ENCODE measurements at regions of chr7 and their contacts with region 1.

Region 1: GRCh38 chr7:100604028-100604975 is 2.1 kb downstream of the PCOLCE start:
- DNase-seq: peak; percentile 64 to 88 (median 76)
- H3K4me3 ChIP-seq: peak overlapping the region; percentile 55
- H3K4me3 Mint-ChIP-seq: peak overlapping the region; percentile 81 to 95 (median 87)
- H3K27ac ChIP-seq: peak overlapping the region; percentile 75
- H3K27ac Mint-ChIP-seq: peak overlapping the region; percentile 38 to 98 (median 94)
- H3K4me1 ChIP-seq: peaks cover 18% of the 10 kb centered on the region
- H3K4me1 Mint-ChIP-seq: peaks cover 11 to 30% (median 18%) of the 10 kb centered on the region in 3 donors
- H3K27me3 ChIP-seq: no peaks in the 10 kb centered on the region
- H3K27me3 Mint-ChIP-seq: no peaks in the 10 kb centered on the region

Region 2: DNA sequence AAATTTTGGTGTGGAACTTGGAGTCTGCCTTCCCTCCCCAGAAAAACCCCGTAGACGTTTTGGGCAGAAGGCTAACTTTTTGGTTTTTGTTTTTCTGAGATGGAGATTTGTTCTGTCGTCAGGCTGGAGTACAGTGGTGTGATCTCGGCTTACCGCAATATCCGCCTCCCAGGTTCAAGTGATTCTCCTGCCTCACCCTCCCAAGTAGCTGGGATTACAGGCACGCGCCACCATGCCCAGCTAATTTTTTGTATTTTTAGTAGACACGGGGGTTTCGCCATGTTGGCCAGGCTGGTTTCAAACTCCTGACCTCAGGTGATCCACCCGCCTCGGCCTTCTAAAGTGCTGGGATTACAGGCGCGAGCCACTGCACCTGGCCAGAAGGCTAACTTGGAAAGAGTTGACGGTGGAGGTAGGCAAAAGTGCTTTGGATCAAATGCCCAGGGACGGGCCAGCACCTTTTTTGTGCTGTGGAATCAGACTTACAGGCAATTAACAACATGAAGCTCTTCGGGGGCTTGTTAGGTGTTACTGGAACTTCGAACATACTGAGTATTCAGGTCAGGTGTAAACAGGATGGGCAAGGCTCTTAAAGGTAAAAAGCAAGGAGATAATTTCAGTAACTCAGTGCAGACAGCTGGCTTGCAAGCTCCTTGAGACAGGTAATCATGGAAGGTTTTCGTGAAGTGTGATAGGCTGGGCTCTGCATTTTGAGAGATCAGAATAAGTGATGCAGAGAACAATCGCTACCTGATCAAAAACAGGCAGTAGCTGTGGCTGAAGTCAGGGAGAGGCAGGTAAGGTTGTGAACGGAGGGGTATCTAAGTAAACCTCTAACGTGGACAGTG is 169.8 kb before region 1 on chr7:
- CTCF ChIA-PET with region 1: no interaction called
- POLR2A ChIA-PET with region 1: no interaction called
- DNase-seq: no peak
- H3K4me3 ChIP-seq: peak overlapping the region; percentile 65
- H3K4me3 Mint-ChIP-seq: peak overlapping the region; percentile 84 to 97 (median 89)
- H3K27ac ChIP-seq: peak overlapping the region; percentile 89
- H3K27ac Mint-ChIP-seq: peak overlapping the region; percentile 83 to 98 (median 92)
- H3K4me1 ChIP-seq: peaks cover 41% of the 10 kb centered on the region
- H3K4me1 Mint-ChIP-seq: peaks cover 42 to 61% (median 44%) of the 10 kb centered on the region in 3 donors
- H3K27me3 ChIP-seq: no peaks in the 10 kb centered on the region
- H3K27me3 Mint-ChIP-seq: peaks cover 0 to 4% of the 10 kb centered on the region in 2 donors

Region 3: GRCh38 chr7:100469227-100470044 is 134.9 kb before region 1 on chr7:
- CTCF ChIA-PET with region 1: no interaction called
- POLR2A ChIA-PET with region 1: no interaction called
- DNase-seq: peak; percentile 69 to 86 (median 80)
- H3K4me3 ChIP-seq: no peak overlapping the region
- H3K4me3 Mint-ChIP-seq: no peak overlapping the region
- H3K27ac ChIP-seq: no peak overlapping the region
- H3K27ac Mint-ChIP-seq: peak overlapping the region in 7 of 8 donors; percentile 64 to 83 (median 70)
- H3K4me1 ChIP-seq: peaks cover 24% of the 10 kb centered on the region
- H3K4me1 Mint-ChIP-seq: peaks cover 17 to 46% (median 31%) of the 10 kb centered on the region in 3 donors
- H3K27me3 ChIP-seq: no peaks in the 10 kb centered on the region
- H3K27me3 Mint-ChIP-seq: no peaks in the 10 kb centered on the region

Region 4: GRCh38 chr7:100626530-100627237 is 22.4 kb after region 1 on chr7:
- CTCF ChIA-PET with region 1: interaction called, 10 read pairs
- POLR2A ChIA-PET with region 1: no interaction called
- DNase-seq: peak; percentile 80 to 93 (median 83)
- H3K4me3 ChIP-seq: peak overlapping the region; percentile 81
- H3K4me3 Mint-ChIP-seq: peak overlapping the region; percentile 69 to 82 (median 77)
- H3K27ac ChIP-seq: peak overlapping the region; percentile 54
- H3K27ac Mint-ChIP-seq: peak overlapping the region; percentile 58 to 88 (median 82)
- H3K4me1 ChIP-seq: peaks cover 16% of the 10 kb centered on the region
- H3K4me1 Mint-ChIP-seq: peaks cover 20 to 40% (median 33%) of the 10 kb centered on the region in 3 donors
- H3K27me3 ChIP-seq: no peaks in the 10 kb centered on the region
- H3K27me3 Mint-ChIP-seq: no peaks in the 10 kb centered on the region